Activated CD8-positive, alpha-beta memory T cell treated with anti-CD3 and anti-CD28 coated beads, Interleukin-2, amount 10 ng/mL, durations not matched to agents 7 days and 5 days (primary cell): ENCODE measurements at regions of chr10 and their contacts with region 1.

Region 1: DNA sequence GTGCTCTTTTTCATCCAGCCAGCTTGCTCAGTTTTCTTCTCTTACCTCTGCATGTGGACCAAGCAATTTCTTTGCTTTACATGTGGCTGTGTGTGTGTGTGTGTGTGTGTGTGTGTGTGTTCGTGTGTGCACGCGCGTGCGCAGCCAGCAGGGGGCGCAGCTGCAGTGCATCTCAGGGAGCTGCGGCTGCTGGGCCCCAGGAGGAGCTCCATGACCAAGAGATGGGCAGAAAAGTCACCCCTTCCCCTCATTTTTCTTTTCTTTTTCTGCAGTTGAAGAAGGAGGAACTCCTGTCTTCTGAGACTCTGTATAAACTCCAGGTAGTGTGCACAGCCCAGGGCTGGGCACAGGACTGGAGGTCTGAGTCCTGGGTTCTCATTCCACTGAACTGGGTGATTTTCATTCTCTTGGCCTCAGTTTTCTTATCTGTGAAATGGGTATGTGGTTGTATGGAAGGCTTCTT is 41.8 kb downstream of the BLNK start:
- DNase-seq: peak; percentile 74
- ATAC-seq: peak; percentile 68
- H3K4me3 Mint-ChIP-seq: no peak overlapping the region
- H3K27ac Mint-ChIP-seq: no peak overlapping the region
- H3K4me1 Mint-ChIP-seq: no peaks in the 10 kb centered on the region
- H3K27me3 Mint-ChIP-seq: no peaks in the 10 kb centered on the region

Region 2: GRCh38 chr10:96208271-96208670 is 21.3 kb before region 1 on chr10:
- CTCF ChIA-PET with region 1: interaction called, 11 read pairs
- DNase-seq: no peak
- ATAC-seq: no peak
- H3K4me3 Mint-ChIP-seq: no peak overlapping the region
- H3K27ac Mint-ChIP-seq: no peak overlapping the region
- H3K4me1 Mint-ChIP-seq: peaks cover 3% of the 10 kb centered on the region
- H3K27me3 Mint-ChIP-seq: peaks cover 14% of the 10 kb centered on the region

Region 3: DNA sequence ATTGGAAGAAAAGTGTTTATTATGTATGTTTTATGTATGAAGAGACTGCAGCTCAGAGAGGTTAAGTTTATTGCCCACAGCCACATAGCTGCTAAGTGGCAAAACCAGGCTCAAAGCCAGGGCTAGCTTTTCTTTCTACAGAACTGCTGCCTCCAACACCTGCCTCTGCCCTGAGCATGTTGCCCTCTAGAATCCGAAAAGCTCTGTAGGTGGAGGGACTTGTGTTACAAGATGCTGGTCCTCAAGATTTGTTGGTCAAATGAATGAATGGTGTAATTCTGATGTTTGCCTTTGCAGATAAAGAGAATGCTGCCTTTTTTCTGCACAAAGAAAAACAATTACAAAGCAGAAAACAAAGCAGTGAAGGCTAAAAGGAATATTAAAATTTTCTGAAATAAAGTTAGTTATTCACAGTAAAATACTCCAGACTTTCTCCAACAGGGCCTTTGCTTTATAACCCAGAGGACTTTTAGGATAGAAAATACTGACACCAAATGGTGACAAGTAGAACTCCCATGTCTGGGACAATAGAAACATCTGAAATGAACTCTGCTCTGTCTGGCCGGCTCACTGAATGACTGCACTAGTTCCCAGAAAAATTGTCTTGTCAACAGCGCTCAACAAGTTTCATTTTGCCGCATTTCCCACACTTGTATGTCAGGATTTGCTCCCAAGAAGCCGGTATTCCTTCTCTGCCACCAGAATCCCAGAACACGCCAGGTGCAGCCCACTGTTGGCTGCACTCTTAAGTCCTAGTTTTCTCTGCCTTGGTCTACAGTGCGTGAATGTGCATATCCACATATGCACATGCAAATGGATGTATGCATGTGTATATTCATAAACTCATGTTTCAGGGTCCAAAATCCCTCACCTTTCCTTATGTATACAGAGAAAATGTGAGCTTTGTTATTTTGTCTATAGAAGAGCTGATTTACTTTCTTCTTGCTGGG is 63.6 kb after region 1 on chr10:
- CTCF ChIA-PET with region 1: interaction called, 20 read pairs
- DNase-seq: no peak
- ATAC-seq: peak; percentile 69
- H3K4me3 Mint-ChIP-seq: no peak overlapping the region
- H3K27ac Mint-ChIP-seq: no peak overlapping the region
- H3K4me1 Mint-ChIP-seq: peaks cover 7% of the 10 kb centered on the region
- H3K27me3 Mint-ChIP-seq: peaks cover 55% of the 10 kb centered on the region

Region 4: DNA sequence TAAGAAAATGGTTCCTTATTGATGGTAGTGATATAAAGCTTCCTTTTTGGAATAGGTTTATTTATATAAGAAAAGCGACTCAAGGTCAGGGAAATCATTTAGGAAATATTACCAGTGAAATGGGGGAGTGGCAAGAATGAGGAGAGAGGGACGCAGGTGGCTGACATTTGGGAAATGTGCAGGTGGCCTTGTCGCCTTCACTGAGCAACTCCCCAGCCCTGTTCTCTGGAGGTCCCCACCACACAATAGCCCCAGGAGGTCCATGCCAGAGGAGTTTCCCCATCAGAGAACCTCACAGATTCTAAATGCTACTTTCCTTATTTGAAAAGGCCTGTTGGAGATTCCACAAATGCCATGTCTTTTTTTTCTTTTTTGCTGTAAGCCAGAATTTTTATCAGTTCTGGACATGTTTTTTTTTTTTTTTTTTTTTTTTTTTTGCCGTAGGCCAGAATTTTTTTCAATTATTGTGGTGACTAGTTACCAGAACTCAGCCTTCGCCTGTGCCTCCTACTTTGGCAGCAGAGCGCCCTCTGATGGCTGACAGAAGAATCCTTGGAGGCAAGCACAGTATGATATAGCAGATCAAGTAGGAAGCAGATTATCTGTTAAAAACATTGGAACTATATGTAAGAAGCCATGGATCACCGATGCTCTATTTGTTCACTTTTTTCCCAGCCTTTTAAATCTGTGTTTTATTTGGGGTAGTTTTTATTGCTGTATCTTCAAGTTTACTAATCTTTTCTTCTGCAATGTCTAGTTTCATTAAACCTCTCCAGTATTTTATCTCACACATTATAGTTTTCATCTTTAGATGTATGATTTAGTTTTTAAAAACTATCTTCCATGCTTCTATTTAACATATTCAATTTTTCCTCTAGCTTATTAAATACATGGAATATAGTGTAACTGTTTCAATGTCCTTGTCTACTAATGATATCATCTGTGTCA is 110.6 kb after region 1 on chr10:
- CTCF ChIA-PET with region 1: interaction called, 18 read pairs
- DNase-seq: peak; percentile 73
- ATAC-seq: peak; percentile 73
- H3K4me3 Mint-ChIP-seq: no peak overlapping the region
- H3K27ac Mint-ChIP-seq: no peak overlapping the region
- H3K4me1 Mint-ChIP-seq: peaks cover 6% of the 10 kb centered on the region
- H3K27me3 Mint-ChIP-seq: peaks cover 39% of the 10 kb centered on the region